ENCODE measurements at regions of chr1 and their contacts with region 1.

Region 1: GRCh38 chr1:15323351-15323988 is 76.4 kb downstream of the FHAD1 start:
- DNase-seq: peak; percentile 76
- H3K4me3 Mint-ChIP-seq: no peak overlapping the region
- H3K27ac Mint-ChIP-seq: no peak overlapping the region
- H3K4me1 Mint-ChIP-seq: peaks cover 3% of the 10 kb centered on the region
- H3K27me3 Mint-ChIP-seq: peaks cover 19% of the 10 kb centered on the region

Region 2: GRCh38 chr1:15308135-15308534 is 15.3 kb before region 1 on chr1:
- CTCF ChIA-PET with region 1: no interaction called
- POLR2A ChIA-PET with region 1: no interaction called
- DNase-seq: no peak
- H3K4me3 Mint-ChIP-seq: no peak overlapping the region
- H3K27ac Mint-ChIP-seq: no peak overlapping the region
- H3K4me1 Mint-ChIP-seq: peaks cover 2% of the 10 kb centered on the region
- H3K27me3 Mint-ChIP-seq: peaks cover 8% of the 10 kb centered on the region

Region 3: GRCh38 chr1:15341634-15342407 is 18.4 kb after region 1 on chr1:
- CTCF ChIA-PET with region 1: interaction called, 10 read pairs
- POLR2A ChIA-PET with region 1: no interaction called
- DNase-seq: no peak
- H3K4me3 Mint-ChIP-seq: no peak overlapping the region
- H3K27ac Mint-ChIP-seq: peak overlapping the region; percentile 67
- H3K4me1 Mint-ChIP-seq: peaks cover 58% of the 10 kb centered on the region
- H3K27me3 Mint-ChIP-seq: peaks cover 17% of the 10 kb centered on the region

Region 4: DNA sequence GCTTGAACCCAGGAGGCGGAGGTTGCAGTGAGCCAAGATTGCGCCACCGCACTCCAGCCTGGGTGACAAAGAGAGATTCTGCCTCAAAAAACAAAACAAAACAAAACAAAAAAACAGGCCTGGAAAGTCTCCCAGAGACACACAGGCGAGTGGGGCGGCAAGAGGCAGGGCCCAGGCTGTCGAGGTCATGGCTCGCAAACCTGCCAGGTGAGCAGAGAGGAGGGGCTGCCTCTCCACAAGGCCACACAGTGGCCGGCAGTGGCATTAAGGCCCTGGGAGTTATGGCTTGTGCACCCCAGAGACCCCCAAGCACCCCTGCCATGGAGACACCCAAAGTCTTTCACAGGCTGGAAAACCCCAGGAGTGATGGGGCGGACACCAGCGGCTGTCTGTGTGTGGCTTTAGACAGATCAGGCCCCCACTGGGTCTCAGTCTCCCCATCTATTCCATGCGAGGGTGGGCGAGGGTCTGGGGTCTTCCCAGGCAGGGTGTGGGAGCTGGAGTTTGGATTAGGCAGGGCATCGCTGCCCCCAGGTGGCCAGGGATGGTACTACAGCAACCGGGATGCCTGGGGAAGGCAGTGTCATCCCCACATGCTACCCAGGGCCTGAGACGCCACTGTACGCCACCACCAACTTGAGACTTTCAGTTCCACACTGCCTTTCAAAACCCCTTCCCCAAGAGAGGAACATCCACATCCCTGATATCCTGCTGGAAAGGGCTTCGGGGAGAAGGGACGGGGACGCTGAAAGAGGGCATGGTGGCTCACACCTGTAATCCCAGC is 107.5 kb after region 1 on chr1:
- CTCF ChIA-PET with region 1: interaction called, 19 read pairs
- POLR2A ChIA-PET with region 1: no interaction called
- DNase-seq: peak; percentile 70
- H3K4me3 Mint-ChIP-seq: no peak overlapping the region
- H3K27ac Mint-ChIP-seq: no peak overlapping the region
- H3K4me1 Mint-ChIP-seq: peaks cover 3% of the 10 kb centered on the region
- H3K27me3 Mint-ChIP-seq: no peaks in the 10 kb centered on the region

Region 5: GRCh38 chr1:15436881-15437442 is 113.5 kb after region 1 on chr1:
- CTCF ChIA-PET with region 1: interaction called, 19 read pairs
- POLR2A ChIA-PET with region 1: no interaction called
- DNase-seq: no peak
- H3K4me3 Mint-ChIP-seq: no peak overlapping the region
- H3K27ac Mint-ChIP-seq: no peak overlapping the region
- H3K4me1 Mint-ChIP-seq: no peaks in the 10 kb centered on the region
- H3K27me3 Mint-ChIP-seq: no peaks in the 10 kb centered on the region

Measured in activated CD4-positive, alpha-beta T cell treated with anti-CD3 and anti-CD28 coated beads, Interleukin-2, amount 10 ng/mL, durations not matched to agents 7 days and 5 days (primary cell).